PC-3 (cell line): ENCODE measurements at regions of chr3 and their contacts with region 1.

Region 1: GRCh38 chr3:136567599-136568188 is 184.5 kb downstream of the STAG1 start:
- DNase-seq: peak; percentile 4
- ATAC-seq: peak; percentile 55
- H3K4me3 ChIP-seq: no peak overlapping the region
- H3K27ac ChIP-seq: no peak overlapping the region
- H3K4me1 ChIP-seq: no peaks in the 10 kb centered on the region
- H3K27me3 ChIP-seq: no peaks in the 10 kb centered on the region
- CTCF ChIP-seq: no peak

Region 2: DNA sequence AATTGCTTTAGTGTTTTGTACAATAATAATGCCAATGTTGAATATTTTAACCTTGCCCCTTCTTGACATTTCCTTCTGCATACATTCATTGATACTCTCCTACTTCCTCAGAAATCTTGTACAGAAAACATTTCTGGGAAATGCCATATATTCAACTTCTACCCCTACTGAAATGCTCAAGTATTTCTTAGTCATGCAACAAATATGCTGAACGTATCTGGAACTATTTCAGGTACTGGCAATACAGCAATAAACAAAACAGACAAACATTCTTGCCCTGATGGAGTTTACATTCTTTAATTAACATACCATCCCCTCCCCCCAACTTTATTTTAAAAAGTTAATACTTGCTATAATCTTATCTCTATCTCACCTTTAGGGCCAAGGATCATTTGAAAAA is 37.3 kb after region 1 on chr3:
- CTCF ChIA-PET with region 1: no interaction called
- POLR2A ChIA-PET with region 1: no interaction called
- intact Hi-C with region 1: loop called (anchors 5 kb)
- DNase-seq: peak; percentile 26
- ATAC-seq: no peak
- H3K4me3 ChIP-seq: no peak overlapping the region
- H3K27ac ChIP-seq: no peak overlapping the region
- H3K4me1 ChIP-seq: 0 out of 2 replicates have a peak, but pooled peaks cover 5% of the 10 kb centered on the region
- H3K27me3 ChIP-seq: no peaks in the 10 kb centered on the region
- CTCF ChIP-seq: no peak